ENCODE measurements at regions of chr4 and their contacts with region 1.

Region 1: GRCh38 chr4:147772459-147772969 is 40.6 kb downstream of the ARHGAP10 start:
- DNase-seq: peak; percentile 86
- H3K4me3 ChIP-seq: no peak overlapping the region
- H3K27ac ChIP-seq: peak overlapping the region; percentile 86
- H3K4me1 ChIP-seq: peaks cover 40% of the 10 kb centered on the region
- H3K27me3 ChIP-seq: no peaks in the 10 kb centered on the region
- CTCF ChIP-seq: no peak

Region 2: DNA sequence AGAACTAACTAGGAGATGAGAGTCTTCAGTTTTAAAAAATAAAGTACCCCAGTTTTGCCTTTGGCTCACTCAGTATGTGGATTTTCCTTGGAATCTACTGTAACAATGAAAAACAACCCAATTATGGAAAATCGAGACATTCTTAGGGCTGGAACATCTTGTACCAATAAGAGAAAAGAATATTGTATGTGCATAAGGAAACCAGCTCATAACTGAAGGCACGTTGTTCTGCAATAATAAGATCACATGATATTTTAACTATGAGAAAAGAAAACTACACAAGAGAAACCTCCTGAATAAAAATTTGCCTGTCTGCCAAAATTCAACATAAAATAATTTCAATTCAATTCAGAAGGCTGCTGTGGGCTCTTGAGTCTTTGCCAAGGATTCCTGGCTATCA is 553.4 kb before region 1 on chr4:
- CTCF ChIA-PET with region 1: no interaction called
- dilution Hi-C with region 1: no loop called
- in situ Hi-C with region 1: no loop called
- intact Hi-C with region 1: no loop called
- DNase-seq: no peak
- H3K4me3 ChIP-seq: no peak overlapping the region
- H3K27ac ChIP-seq: no peak overlapping the region
- H3K4me1 ChIP-seq: no peaks in the 10 kb centered on the region
- H3K27me3 ChIP-seq: no peaks in the 10 kb centered on the region
- CTCF ChIP-seq: no peak

Region 3: GRCh38 chr4:147570616-147571015 is 201.9 kb before region 1 on chr4:
- CTCF ChIA-PET with region 1: no interaction called
- dilution Hi-C with region 1: no loop called
- in situ Hi-C with region 1: no loop called
- intact Hi-C with region 1: no loop called
- DNase-seq: no peak
- H3K4me3 ChIP-seq: no peak overlapping the region
- H3K27ac ChIP-seq: no peak overlapping the region
- H3K4me1 ChIP-seq: no peaks in the 10 kb centered on the region
- H3K27me3 ChIP-seq: no peaks in the 10 kb centered on the region
- CTCF ChIP-seq: no peak

Region 4: GRCh38 chr4:147822128-147822527 is 49.6 kb after region 1 on chr4:
- CTCF ChIA-PET with region 1: no interaction called
- dilution Hi-C with region 1: loop called (anchors 5 kb)
- in situ Hi-C with region 1: no loop called
- intact Hi-C with region 1: no loop called
- DNase-seq: peak; percentile 98
- H3K4me3 ChIP-seq: no peak overlapping the region
- H3K27ac ChIP-seq: peak overlapping the region; percentile 80
- H3K4me1 ChIP-seq: peaks cover 60% of the 10 kb centered on the region
- H3K27me3 ChIP-seq: no peaks in the 10 kb centered on the region
- CTCF ChIP-seq: no peak

Region 5: DNA sequence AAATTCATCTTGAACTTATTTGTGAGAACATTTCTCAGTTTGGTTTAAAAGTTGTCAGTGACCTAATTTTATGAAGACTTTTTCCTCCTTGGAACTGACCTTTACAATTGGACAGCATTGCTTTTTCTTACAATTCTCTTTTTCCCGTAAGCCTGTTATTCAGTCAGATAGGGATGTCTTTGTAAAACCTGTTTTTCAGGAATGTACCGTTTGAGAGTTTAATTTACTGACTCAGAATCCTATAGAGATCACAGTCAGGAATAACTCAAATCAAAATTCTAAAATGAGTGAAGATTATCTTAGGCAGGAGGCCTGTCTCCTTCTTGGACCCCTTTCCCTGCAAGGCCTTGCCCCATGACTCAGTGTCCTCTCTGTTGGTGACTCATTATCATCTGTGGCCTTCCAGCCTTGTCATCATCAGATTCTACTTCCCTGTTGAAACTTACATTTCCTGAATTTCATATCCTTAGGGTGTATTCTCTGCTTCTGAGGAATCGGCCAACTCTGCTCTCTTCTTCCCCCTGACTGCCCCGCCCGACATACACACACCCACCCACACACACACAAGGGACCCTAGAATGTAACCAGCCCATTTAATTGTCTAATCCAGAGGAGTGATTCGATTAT is 59.1 kb after region 1 on chr4:
- CTCF ChIA-PET with region 1: no interaction called
- dilution Hi-C with region 1: no loop called
- in situ Hi-C with region 1: no loop called
- intact Hi-C with region 1: loop called (anchors 2 kb)
- DNase-seq: peak; percentile 96
- H3K4me3 ChIP-seq: no peak overlapping the region
- H3K27ac ChIP-seq: peak overlapping the region; percentile 90
- H3K4me1 ChIP-seq: peaks cover 55% of the 10 kb centered on the region
- H3K27me3 ChIP-seq: no peaks in the 10 kb centered on the region
- CTCF ChIP-seq: no peak